PC-3 (cell line): ENCODE measurements at regions of chr12 and their contacts with region 1.

Region 1: DNA sequence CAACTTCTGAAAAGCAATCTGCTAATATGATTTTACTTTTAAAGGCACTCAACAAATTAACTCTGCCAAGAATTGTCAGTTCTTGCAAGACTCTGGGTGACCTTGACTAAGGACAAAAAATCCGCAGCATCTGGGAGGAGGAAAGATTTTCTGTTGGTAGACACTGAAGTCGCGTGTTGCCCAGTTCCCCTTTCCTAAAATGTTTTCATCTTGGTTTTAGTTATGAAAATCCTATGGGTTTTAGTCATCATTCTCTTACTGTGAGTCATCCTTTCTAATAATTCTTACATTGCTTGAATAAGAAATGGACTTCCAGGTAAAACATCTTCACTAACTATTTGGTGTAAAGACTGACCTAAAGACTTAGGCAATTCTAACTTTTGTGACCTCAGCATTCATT is 9.1 kb downstream of the GSG1 start:
- DNase-seq: peak; percentile 71
- ATAC-seq: 0 out of 2 replicates have a peak, but pooled peaks have one; percentile 2
- H3K4me3 ChIP-seq: peak overlapping the region; percentile 13; the same call in 1 of the 2 replicates
- H3K27ac ChIP-seq: peak overlapping the region; percentile 63
- H3K4me1 ChIP-seq: peaks cover 56% of the 10 kb centered on the region
- H3K27me3 ChIP-seq: no peaks in the 10 kb centered on the region
- CTCF ChIP-seq: no peak

Region 2: GRCh38 chr12:12803186-12803585 is 291.2 kb before region 1 on chr12:
- CTCF ChIA-PET with region 1: no interaction called
- POLR2A ChIA-PET with region 1: no interaction called
- intact Hi-C with region 1: loop called (anchors 10 kb)
- DNase-seq: peak; percentile 95
- ATAC-seq: peak; percentile 75
- H3K4me3 ChIP-seq: no peak overlapping the region
- H3K27ac ChIP-seq: peak overlapping the region; percentile 100
- H3K4me1 ChIP-seq: peaks cover 59% of the 10 kb centered on the region
- H3K27me3 ChIP-seq: no peaks in the 10 kb centered on the region
- CTCF ChIP-seq: no peak

Region 3: GRCh38 chr12:12999959-13000615 is 94.3 kb before region 1 on chr12 and contains the start of gene HEBP1:
- CTCF ChIA-PET with region 1: no interaction called
- POLR2A ChIA-PET with region 1: no interaction called
- intact Hi-C with region 1: loop called (anchors 1 kb)
- DNase-seq: peak; percentile 76
- ATAC-seq: peak; percentile 69
- H3K4me3 ChIP-seq: peak within 1 kb of the TSS; percentile 100
- H3K27ac ChIP-seq: peak within 1 kb of the TSS; percentile 14
- H3K4me1 ChIP-seq: peaks cover 19% of the 10 kb centered on the region
- H3K27me3 ChIP-seq: no peaks in the 10 kb centered on the region
- CTCF ChIP-seq: no peak
- total RNA-seq, gene HEBP1: 6.2 and 8.2 TPM in 2 replicates

Region 4: GRCh38 chr12:13135371-13136178 is 41.2 kb after region 1 on chr12:
- CTCF ChIA-PET with region 1: no interaction called
- POLR2A ChIA-PET with region 1: no interaction called
- intact Hi-C with region 1: loop called (anchors 1 kb)
- DNase-seq: peak; percentile 97
- ATAC-seq: peak; percentile 94
- H3K4me3 ChIP-seq: peak overlapping the region; percentile 62
- H3K27ac ChIP-seq: peak overlapping the region; percentile 89
- H3K4me1 ChIP-seq: peaks cover 40% of the 10 kb centered on the region
- H3K27me3 ChIP-seq: no peaks in the 10 kb centered on the region
- CTCF ChIP-seq: peak; percentile 31; the same call in 1 of the 2 replicates

Region 5: DNA sequence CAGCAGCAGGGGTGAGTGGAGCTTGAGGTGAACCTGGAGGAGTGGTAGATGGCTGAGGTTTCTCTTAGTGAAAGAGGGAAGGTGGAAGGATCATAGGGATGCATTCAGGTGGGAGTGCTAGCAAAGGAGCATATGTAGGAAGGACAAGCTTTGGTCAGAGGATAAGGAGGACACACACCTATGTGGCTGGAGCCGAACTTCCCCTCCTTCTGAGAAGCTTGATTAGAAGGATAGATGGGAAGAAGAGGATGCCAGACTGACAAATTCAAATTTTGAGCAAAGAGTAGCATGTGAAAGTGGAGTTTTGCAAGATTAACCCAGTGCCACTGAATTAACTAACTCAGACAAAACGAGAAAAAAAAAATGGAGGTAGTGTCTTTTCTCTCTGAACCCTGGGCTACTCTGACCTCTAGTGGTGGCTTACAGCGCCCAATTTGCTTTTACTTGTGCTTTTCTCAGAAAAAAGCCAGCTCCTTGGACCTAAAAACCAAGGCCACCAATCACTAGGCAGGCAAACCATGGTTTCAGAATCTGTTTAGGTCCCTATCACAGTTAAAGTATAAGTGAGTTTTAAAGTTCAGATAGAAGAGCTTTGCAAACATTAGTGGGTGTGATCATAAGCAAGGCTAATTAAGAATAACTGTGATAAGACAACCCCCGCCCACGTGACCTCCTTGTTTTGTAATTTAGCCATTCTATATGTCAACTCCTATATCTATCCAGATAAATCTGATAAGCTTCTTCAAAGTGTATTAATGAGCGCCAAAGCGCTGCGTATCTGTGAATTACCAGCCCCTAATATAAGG is 117.7 kb after region 1 on chr12:
- CTCF ChIA-PET with region 1: interaction called, 17 read pairs
- POLR2A ChIA-PET with region 1: interaction called, 7 read pairs
- intact Hi-C with region 1: loop called (anchors 1 kb)
- DNase-seq: peak; percentile 77
- ATAC-seq: no peak; the same call in 1 of the 2 replicates
- H3K4me3 ChIP-seq: no peak overlapping the region
- H3K27ac ChIP-seq: peak overlapping the region; percentile 19
- H3K4me1 ChIP-seq: peaks cover 49% of the 10 kb centered on the region
- H3K27me3 ChIP-seq: no peaks in the 10 kb centered on the region
- CTCF ChIP-seq: peak; percentile 71

Region 6: GRCh38 chr12:13304924-13305323 is 210.6 kb after region 1 on chr12:
- CTCF ChIA-PET with region 1: no interaction called
- POLR2A ChIA-PET with region 1: no interaction called
- intact Hi-C with region 1: no loop called
- DNase-seq: no peak
- ATAC-seq: no peak
- H3K4me3 ChIP-seq: no peak overlapping the region
- H3K27ac ChIP-seq: no peak overlapping the region
- H3K4me1 ChIP-seq: no peaks in the 10 kb centered on the region
- H3K27me3 ChIP-seq: peaks cover 26% of the 10 kb centered on the region; the same call in 1 of the 2 replicates
- CTCF ChIP-seq: no peak